Dorsolateral prefrontal cortex (tissue), 120 donors: ENCODE measurements at regions of chr18 and their contacts with region 1.

Region 1: DNA sequence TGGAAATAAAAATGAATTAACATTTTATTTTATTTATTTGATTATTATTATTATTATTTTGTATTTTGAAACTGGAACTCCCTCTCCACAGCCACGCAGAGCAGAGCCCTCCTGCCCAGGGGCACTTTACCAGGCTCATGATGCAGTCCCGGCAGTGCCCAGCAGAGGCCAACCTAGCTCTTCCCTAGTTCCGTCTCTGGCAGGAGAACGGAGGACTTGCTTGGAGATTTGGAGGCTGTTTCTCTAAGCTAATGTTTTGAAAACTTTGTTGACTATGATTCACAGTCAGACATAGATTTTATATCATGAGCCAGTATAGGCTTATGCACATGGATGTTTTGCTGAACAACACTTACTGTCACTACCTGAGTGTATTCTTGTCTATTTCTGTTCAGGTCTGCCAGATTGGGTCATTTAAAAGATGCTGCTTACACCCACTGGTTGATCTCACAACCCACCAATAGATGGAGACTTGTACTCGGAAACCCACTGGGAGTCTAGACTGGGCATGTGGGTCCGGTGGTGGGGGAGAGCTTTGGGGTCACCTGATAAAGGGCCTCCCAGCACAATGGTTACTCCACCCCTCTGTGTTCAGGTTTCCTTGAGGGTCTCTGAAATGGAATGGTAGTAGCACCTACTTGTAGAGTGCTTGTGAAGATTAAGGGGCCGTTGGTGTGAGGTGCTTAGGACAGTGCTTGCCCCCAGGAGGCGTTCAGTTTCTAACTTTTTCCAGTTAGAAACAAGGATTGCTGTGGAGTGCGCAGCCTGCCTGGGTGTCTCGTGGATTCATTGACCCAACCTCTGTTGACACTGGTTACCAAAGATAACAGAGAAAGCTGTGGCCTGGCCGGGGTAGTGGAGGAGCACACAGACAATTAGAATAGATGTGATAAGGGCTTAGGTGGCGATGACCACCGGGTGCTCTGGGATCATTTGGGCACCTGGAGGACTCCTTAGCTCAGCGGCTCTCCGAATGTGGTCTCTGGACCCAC is 177.3 kb downstream of the HAUS1 start:
- DNase-seq: peak; percentile 56 to 83 (median 70)
- H3K4me3 ChIP-seq: no peak overlapping the region
- H3K27ac ChIP-seq: no peak overlapping the region
- H3K27me3 ChIP-seq: no peaks in the 10 kb centered on the region
- CTCF ChIP-seq: peak; percentile 54 to 99 (median 90)

Region 2: DNA sequence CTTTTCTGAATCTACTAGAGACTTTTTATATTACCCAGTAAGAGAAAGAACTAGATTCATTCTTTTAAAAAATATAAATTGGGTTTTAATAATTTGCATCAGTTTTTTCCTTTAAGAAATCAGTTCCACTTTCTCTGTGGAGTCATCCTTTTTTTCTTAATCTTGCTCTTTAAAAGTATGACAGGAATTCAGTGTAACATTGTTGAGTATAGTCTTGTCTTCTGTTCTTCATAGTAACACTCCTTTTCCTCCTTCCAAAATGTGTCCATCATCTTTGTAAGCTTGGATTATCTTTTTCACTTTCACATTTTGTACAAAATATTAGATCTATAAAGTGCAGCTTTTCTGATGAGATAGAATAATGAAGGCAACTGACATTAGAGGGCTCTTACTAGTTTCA is 41.9 kb before region 1 on chr18:
- intact Hi-C with region 1: no loop called
- DNase-seq: no peak
- H3K4me3 ChIP-seq: no peak overlapping the region
- H3K27ac ChIP-seq: no peak overlapping the region
- H3K27me3 ChIP-seq: no peaks in the 10 kb centered on the region
- CTCF ChIP-seq: no peak

Region 3: GRCh38 chr18:46433121-46433826 is 151.8 kb after region 1 on chr18:
- intact Hi-C with region 1: no loop called
- DNase-seq: no peak
- H3K4me3 ChIP-seq: no peak overlapping the region
- H3K27ac ChIP-seq: no peak overlapping the region
- H3K27me3 ChIP-seq: no peaks in the 10 kb centered on the region
- CTCF ChIP-seq: no peak

Region 4: GRCh38 chr18:46481048-46481846 is 199.8 kb after region 1 on chr18:
- intact Hi-C with region 1: loop called in 1 of 2 experiments (anchors 10 kb)
- DNase-seq: peak in 2 of 10 donors; percentile 42 to 71
- H3K4me3 ChIP-seq: no peak overlapping the region
- H3K27ac ChIP-seq: no peak overlapping the region
- H3K27me3 ChIP-seq: peaks cover 0 to 8% (median 0%) of the 10 kb centered on the region in 45 donors
- CTCF ChIP-seq: peak; percentile 23 to 73 (median 58)

Region 5: DNA sequence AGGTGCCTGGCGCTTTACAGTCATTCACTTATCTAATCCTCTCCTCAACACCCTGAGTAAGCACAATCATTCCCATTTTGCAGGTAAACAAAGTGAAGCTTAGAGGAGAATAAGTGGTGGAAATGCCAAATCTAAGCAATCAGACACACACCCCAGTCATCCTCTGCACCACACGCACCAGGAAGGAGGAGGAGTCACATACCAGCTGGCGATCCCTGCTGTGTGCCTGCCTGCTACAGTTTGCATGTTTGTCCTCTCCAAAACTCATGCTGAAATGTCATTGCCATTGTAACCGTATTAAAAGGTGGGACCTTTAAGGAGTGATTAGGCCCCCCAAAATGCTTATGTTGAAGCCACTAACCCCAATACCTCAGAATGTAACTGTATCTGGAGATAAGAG is 281.8 kb after region 1 on chr18:
- intact Hi-C with region 1: loop called in 1 of 2 experiments (anchors 10 kb)
- DNase-seq: no peak
- H3K4me3 ChIP-seq: no peak overlapping the region
- H3K27ac ChIP-seq: no peak overlapping the region
- H3K27me3 ChIP-seq: peaks cover 0 to 3% (median 0%) of the 10 kb centered on the region in 45 donors
- CTCF ChIP-seq: no peak

Region 6: GRCh38 chr18:46622999-46623398 is 341.5 kb after region 1 on chr18:
- intact Hi-C with region 1: loop called (anchors 1 to 2 kb)
- DNase-seq: no peak
- H3K4me3 ChIP-seq: no peak overlapping the region
- H3K27ac ChIP-seq: peak overlapping the region in 19 of 59 donors; percentile 13 to 76 (median 43)
- H3K27me3 ChIP-seq: no peaks in the 10 kb centered on the region
- CTCF ChIP-seq: peak in 50 of 56 donors; percentile 12 to 62 (median 40)

Region 7: DNA sequence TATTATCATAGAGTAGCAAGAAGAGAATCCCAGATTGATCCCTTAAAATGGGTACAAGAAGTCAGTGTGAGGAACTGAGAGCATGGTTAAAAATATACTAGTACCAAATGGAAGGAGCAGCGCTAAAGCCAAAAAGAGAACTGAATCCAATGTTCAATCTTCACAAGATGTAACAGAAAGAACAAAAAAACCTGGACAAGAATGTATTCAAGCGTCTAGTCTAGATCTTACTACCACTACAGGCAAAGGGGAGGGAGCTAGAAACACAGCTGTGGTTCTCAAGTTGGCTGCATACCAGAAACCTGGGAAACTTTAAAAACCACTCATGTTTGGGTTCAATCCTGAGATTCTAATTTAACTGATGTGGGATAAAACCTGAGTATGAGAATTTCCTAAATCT is 578.4 kb after region 1 on chr18:
- intact Hi-C with region 1: loop called in 1 of 2 experiments (anchors 5 kb)
- DNase-seq: no peak
- H3K4me3 ChIP-seq: no peak overlapping the region
- H3K27ac ChIP-seq: no peak overlapping the region
- H3K27me3 ChIP-seq: no peaks in the 10 kb centered on the region
- CTCF ChIP-seq: no peak